T-cell (primary cell): ENCODE measurements at regions of chr17 and their contacts with region 1.

Region 1: GRCh38 chr17:29352146-29352545 is 38.0 kb upstream of the TAOK1 start:
- DNase-seq: no peak
- ATAC-seq: no peak
- H3K4me3 ChIP-seq: no peak overlapping the region
- H3K4me3 Mint-ChIP-seq: no peak overlapping the region
- H3K27ac ChIP-seq: no peak overlapping the region
- H3K27ac Mint-ChIP-seq: no peak overlapping the region
- H3K4me1 ChIP-seq: no peaks in the 10 kb centered on the region
- H3K4me1 Mint-ChIP-seq: peaks cover 0 to 2% (median 0%) of the 10 kb centered on the region in 3 donors
- H3K27me3 ChIP-seq: no peaks in the 10 kb centered on the region
- H3K27me3 Mint-ChIP-seq: peaks cover 2% of the 10 kb centered on the region in 2 donors

Region 2: GRCh38 chr17:29401258-29401657 is 49.1 kb after region 1 on chr17:
- CTCF ChIA-PET with region 1: no interaction called
- POLR2A ChIA-PET with region 1: no interaction called
- DNase-seq: no peak
- ATAC-seq: no peak
- H3K4me3 ChIP-seq: no peak overlapping the region
- H3K4me3 Mint-ChIP-seq: no peak overlapping the region
- H3K27ac ChIP-seq: no peak overlapping the region
- H3K27ac Mint-ChIP-seq: no peak overlapping the region
- H3K4me1 ChIP-seq: peaks cover 0 to 14% of the 10 kb centered on the region in 2 experiments
- H3K4me1 Mint-ChIP-seq: peaks cover 28 to 35% (median 28%) of the 10 kb centered on the region in 3 donors
- H3K27me3 ChIP-seq: no peaks in the 10 kb centered on the region
- H3K27me3 Mint-ChIP-seq: no peaks in the 10 kb centered on the region

Region 3: DNA sequence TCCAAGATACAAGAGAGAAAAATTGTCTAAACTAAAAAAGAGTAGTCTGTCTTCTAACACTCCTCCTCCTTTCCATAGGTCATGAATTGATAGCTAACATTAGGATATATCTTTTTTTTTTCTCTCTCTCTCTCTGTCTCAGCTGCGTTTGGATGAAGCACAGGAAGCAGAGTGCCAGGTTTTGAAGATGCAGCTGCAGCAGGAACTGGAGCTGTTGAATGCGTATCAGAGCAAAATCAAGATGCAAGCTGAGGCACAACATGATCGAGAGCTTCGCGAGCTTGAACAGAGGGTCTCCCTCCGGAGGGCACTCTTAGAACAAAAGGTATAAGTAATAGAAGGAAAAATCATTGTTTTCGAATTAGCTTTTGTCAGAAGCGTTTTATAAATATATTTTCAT is 181.8 kb after region 1 on chr17:
- CTCF ChIA-PET with region 1: interaction called in 1 of 2 experiments, 14 read pairs
- POLR2A ChIA-PET with region 1: no interaction called
- DNase-seq: no peak
- ATAC-seq: no peak
- H3K4me3 ChIP-seq: no peak overlapping the region
- H3K4me3 Mint-ChIP-seq: no peak overlapping the region
- H3K27ac ChIP-seq: no peak overlapping the region
- H3K27ac Mint-ChIP-seq: no peak overlapping the region
- H3K4me1 ChIP-seq: no peaks in the 10 kb centered on the region
- H3K4me1 Mint-ChIP-seq: no peaks in the 10 kb centered on the region
- H3K27me3 ChIP-seq: no peaks in the 10 kb centered on the region
- H3K27me3 Mint-ChIP-seq: no peaks in the 10 kb centered on the region